A673 (cell line): ENCODE measurements at regions of chr15 and their contacts with region 1.

Region 1: GRCh38 chr15:71532994-71533393 is 277.4 kb upstream of the NR2E3 start:
- DNase-seq: peak; percentile 50
- H3K4me3 ChIP-seq: no peak overlapping the region
- H3K27ac ChIP-seq: no peak overlapping the region
- H3K4me1 ChIP-seq: no peaks in the 10 kb centered on the region
- H3K27me3 ChIP-seq: peaks cover 37% of the 10 kb centered on the region
- CTCF ChIP-seq: peak; percentile 80

Region 2: DNA sequence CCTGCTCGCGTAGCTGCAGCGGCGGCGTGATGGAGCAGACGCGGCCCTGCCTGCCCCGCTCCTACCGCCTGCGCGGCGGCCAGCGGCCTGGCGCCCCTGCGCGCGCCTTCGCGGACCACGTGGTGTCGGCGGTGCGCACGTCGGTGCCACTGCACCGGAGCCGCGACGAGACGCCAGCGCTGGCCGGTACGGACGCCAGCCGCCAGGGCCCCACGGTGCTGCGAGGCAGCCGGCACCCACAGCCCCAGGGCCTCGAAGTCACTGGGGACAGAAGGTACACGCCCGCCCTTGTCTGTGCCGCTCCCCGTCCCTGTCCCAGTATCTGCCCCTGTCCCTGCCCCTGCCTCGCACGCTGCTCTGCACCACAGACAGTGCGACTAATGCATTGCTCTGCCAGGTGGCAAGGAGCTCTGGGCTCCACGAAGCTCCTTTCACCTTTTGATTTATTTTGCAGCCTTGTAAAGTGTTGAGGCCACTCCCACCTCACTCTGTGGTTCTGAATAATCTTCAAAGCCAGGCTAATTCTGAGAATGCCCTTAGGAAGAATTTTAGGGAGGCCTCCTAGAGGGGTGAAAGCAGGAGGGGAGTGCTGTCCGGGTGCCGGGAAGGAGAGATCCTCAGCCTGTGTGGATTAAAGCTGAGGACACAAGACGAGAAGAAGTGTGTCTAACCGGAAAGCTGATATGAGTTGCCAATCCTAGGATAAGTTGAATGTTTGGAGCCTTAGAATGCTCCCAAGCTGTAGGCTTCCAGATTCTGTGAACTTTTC is 317.7 kb before region 1 on chr15:
- CTCF ChIA-PET with region 1: interaction called, 11 read pairs
- POLR2A ChIA-PET with region 1: no interaction called
- intact Hi-C with region 1: no loop called
- DNase-seq: no peak
- H3K4me3 ChIP-seq: no peak overlapping the region
- H3K27ac ChIP-seq: no peak overlapping the region
- H3K4me1 ChIP-seq: peaks cover 12% of the 10 kb centered on the region
- H3K27me3 ChIP-seq: no peaks in the 10 kb centered on the region
- CTCF ChIP-seq: no peak

Region 3: GRCh38 chr15:71707230-71708050 is 174.4 kb after region 1 on chr15:
- CTCF ChIA-PET with region 1: no interaction called
- POLR2A ChIA-PET with region 1: no interaction called
- intact Hi-C with region 1: no loop called
- DNase-seq: no peak
- H3K4me3 ChIP-seq: no peak overlapping the region
- H3K27ac ChIP-seq: no peak overlapping the region
- H3K4me1 ChIP-seq: no peaks in the 10 kb centered on the region
- H3K27me3 ChIP-seq: peaks cover 15% of the 10 kb centered on the region
- CTCF ChIP-seq: no peak